Activated CD4-positive, alpha-beta T cell treated with anti-CD3 and anti-CD28 coated beads, Interleukin-2, amount 10 ng/mL, durations not matched to agents 24 days and 14 days (primary cell): ENCODE measurements at regions of chr18 and their contacts with region 1.

Region 1: GRCh38 chr18:49178736-49179135 is 228.0 kb upstream of the SMAD7 start:
- DNase-seq: no peak
- H3K4me3 Mint-ChIP-seq: no peak overlapping the region
- H3K27ac Mint-ChIP-seq: no peak overlapping the region
- H3K4me1 Mint-ChIP-seq: peaks cover 21% of the 10 kb centered on the region
- H3K27me3 Mint-ChIP-seq: peaks cover 1% of the 10 kb centered on the region

Region 2: GRCh38 chr18:48675352-48675761 is 503.4 kb before region 1 on chr18:
- intact Hi-C with region 1: loop called (anchors 5 kb)
- DNase-seq: peak; percentile 95
- H3K4me3 Mint-ChIP-seq: no peak overlapping the region
- H3K27ac Mint-ChIP-seq: no peak overlapping the region
- H3K4me1 Mint-ChIP-seq: peaks cover 2% of the 10 kb centered on the region
- H3K27me3 Mint-ChIP-seq: no peaks in the 10 kb centered on the region

Region 3: DNA sequence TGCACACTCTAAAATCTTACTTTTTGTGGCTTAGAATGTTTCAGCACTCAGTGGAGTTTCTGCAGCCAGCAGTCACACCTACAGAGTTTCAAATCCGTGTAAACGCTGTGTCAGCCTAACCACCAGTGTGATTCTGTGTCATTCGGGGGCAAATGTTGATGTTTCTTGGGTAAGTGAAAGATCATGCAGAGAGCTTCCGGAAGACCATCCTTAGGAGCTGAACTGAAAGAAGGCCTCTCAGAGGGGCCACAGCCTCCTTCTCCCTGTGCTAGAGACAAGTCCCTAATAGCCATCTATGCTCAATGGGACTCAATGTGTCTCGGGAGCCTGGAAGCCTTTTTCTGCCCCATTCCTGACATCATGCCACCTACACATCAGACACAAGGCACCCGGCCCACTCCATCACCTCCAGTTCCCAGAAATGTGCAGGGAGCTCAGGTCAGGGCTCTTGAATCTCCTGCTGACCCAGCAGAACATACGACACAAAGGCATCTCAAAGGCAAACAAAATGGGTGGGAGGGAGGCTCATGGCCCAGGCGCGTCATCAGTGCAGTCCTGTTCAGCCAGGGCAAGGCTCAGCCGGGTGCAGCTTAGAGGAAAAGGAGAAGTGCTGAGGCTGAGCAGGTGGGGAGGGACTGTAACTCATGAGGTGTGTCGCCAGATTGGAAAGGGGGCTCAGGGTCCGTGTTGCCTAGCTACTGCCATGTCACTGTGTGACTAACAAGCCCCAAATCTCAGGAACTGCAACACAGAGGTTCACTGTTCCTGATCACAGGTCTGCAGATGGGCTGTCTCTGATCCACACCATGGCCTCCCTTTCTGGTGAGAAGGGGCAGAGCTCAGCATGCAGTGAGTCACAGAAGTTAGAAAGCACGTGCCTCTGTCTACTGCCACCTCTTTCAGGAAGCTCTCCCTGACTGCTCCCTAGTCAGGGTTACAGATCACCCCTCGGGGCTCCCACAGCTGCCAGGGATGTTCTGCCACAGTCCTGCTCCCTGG is 310.0 kb before region 1 on chr18:
- intact Hi-C with region 1: loop called (anchors 5 kb)
- DNase-seq: peak; percentile 83
- H3K4me3 Mint-ChIP-seq: peak overlapping the region; percentile 73
- H3K27ac Mint-ChIP-seq: peak overlapping the region; percentile 97
- H3K4me1 Mint-ChIP-seq: peaks cover 28% of the 10 kb centered on the region
- H3K27me3 Mint-ChIP-seq: no peaks in the 10 kb centered on the region

Region 4: GRCh38 chr18:49021433-49022129 is 157.2 kb before region 1 on chr18:
- intact Hi-C with region 1: loop called (anchors 2 kb)
- DNase-seq: peak; percentile 85
- H3K4me3 Mint-ChIP-seq: no peak overlapping the region
- H3K27ac Mint-ChIP-seq: no peak overlapping the region
- H3K4me1 Mint-ChIP-seq: peaks cover 3% of the 10 kb centered on the region
- H3K27me3 Mint-ChIP-seq: no peaks in the 10 kb centered on the region

Region 5: DNA sequence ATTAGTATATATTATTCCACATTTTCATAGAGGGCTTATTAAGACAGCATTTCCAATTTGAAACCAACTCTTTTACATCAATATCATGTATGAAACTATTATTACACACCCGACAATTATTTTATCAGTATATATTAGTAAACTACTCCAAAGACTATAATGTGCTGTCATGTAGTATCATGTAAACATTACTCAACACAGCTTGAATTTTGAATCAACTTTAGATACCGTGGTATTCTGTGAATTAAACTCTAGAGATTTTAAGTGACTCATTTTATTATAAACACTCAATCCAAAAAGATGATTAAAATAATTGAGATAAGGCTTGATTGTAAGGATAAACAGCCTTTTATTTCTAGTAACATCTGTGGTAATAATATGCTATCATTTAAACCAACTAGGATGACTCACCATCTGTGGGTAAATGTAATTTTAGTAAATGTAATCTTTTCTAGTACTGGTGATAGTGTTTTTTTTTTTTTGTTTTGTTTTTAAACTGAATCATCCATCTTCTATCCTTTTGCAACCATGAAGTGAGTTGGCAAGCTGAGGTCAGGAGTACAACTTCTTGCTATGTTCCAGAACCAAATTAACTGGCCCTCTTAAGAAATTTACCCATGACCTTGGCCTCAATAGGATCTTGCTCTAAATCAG is 83.6 kb before region 1 on chr18:
- intact Hi-C with region 1: loop called (anchors 5 kb)
- DNase-seq: no peak
- H3K4me3 Mint-ChIP-seq: no peak overlapping the region
- H3K27ac Mint-ChIP-seq: no peak overlapping the region
- H3K4me1 Mint-ChIP-seq: peaks cover 2% of the 10 kb centered on the region
- H3K27me3 Mint-ChIP-seq: no peaks in the 10 kb centered on the region

Region 6: GRCh38 chr18:49227441-49228165 is 48.9 kb after region 1 on chr18:
- intact Hi-C with region 1: loop called (anchors 2 kb)
- DNase-seq: peak; percentile 87
- H3K4me3 Mint-ChIP-seq: peak overlapping the region; percentile 24
- H3K27ac Mint-ChIP-seq: peak overlapping the region; percentile 31
- H3K4me1 Mint-ChIP-seq: peaks cover 17% of the 10 kb centered on the region
- H3K27me3 Mint-ChIP-seq: no peaks in the 10 kb centered on the region

Region 7: DNA sequence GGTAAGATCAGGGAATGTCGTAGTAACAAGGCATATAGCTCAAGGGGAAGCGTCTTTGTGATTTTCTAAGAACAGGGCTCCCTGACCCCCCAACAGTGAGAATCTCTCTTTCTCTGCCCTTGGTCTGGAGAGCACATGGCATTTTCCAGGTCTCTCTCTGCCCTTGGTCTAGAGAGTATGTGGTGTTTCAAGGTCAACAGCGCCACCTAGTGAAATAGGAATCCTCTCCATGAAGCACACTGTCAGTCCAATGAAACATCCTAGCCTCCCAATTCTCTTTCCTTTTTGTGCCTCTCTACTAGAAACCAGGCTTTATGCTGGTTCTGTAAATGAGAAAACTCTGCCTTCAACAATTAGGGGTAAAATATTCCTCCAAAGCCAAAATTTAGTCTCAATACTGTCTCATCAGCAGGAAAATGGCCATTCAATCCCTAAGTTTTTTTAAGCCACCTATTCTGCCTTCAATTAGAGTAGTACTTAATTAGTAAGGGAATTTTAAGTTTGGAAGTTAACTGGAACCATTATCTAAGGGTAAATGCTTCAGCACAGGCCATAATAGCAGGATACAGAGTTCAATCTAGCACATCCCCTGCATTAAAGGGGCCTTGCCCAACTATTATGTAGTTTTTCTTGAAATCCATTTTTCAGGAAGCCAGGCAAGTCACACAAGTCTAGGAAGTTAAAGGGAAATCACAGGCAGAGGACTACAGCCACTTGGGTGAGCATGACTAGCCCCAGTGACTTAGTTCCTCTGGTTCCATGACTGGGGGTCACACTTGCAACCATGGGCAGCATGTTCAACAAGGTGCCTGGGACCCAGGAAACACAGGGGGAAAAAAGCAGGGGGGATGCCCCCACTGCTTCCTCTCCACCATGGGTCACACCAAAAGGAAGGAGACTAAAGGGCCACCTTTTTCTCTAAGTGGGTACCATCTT is 269.3 kb after region 1 on chr18:
- intact Hi-C with region 1: loop called (anchors 10 kb)
- DNase-seq: peak; percentile 86
- H3K4me3 Mint-ChIP-seq: no peak overlapping the region
- H3K27ac Mint-ChIP-seq: no peak overlapping the region
- H3K4me1 Mint-ChIP-seq: peaks cover 14% of the 10 kb centered on the region
- H3K27me3 Mint-ChIP-seq: no peaks in the 10 kb centered on the region